ENCODE measurements at regions of chr13 and their contacts with region 1.

Region 1: GRCh38 chr13:29362849-29363604 is 232.5 kb downstream of the SLC7A1 start:
- DNase-seq: no peak
- H3K4me3 ChIP-seq: no peak overlapping the region
- H3K27ac ChIP-seq: no peak overlapping the region
- H3K4me1 ChIP-seq: no peaks in the 10 kb centered on the region
- H3K27me3 ChIP-seq: no peaks in the 10 kb centered on the region
- CTCF ChIP-seq: peak; percentile 66 to 96 (median 86)
- EP300 ChIP-seq: no peak
- POLR2A ChIP-seq: no peak

Region 2: GRCh38 chr13:28805193-28805819 is 557.7 kb before region 1 on chr13:
- intact Hi-C with region 1: loop called (anchors 5 kb)
- DNase-seq: no peak
- H3K4me3 ChIP-seq: no peak overlapping the region
- H3K27ac ChIP-seq: no peak overlapping the region
- H3K4me1 ChIP-seq: no peaks in the 10 kb centered on the region
- H3K27me3 ChIP-seq: peaks cover 0 to 13% (median 6%) of the 10 kb centered on the region in 3 donors
- CTCF ChIP-seq: peak in 1 of 4 experiments; percentile 20
- EP300 ChIP-seq: no peak
- POLR2A ChIP-seq: no peak

Region 3: GRCh38 chr13:28819735-28820098 is 543.3 kb before region 1 on chr13:
- intact Hi-C with region 1: loop called (anchors 5 kb)
- DNase-seq: no peak
- H3K4me3 ChIP-seq: peak overlapping the region in 3 of 4 donors; percentile 35 to 57 (median 51)
- H3K27ac ChIP-seq: no peak overlapping the region
- H3K4me1 ChIP-seq: peaks cover 0 to 18% (median 16%) of the 10 kb centered on the region in 4 donors
- H3K27me3 ChIP-seq: peaks cover 11 to 33% (median 31%) of the 10 kb centered on the region in 3 donors
- CTCF ChIP-seq: peak in 1 of 4 experiments; percentile 16
- EP300 ChIP-seq: no peak
- POLR2A ChIP-seq: no peak

Region 4: DNA sequence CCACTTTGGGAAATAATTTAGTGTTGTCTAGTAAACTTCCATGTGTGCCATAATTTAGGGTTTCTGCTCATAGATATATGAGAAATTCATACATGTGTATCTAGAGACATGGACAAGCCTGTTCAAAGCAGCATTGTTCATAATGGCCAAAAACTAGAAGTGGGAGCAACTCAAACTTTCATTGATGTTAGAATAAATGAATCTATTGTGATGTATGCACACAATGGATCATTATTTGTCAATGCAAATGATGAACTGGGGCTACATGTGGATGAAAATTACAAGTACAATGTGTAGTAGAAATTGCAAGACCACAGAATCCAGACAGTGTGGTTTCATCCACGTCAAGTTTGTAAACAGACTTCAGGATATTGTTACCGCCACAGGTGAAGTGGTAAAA is 52.2 kb before region 1 on chr13:
- intact Hi-C with region 1: no loop called
- DNase-seq: no peak
- H3K4me3 ChIP-seq: no peak overlapping the region
- H3K27ac ChIP-seq: no peak overlapping the region
- H3K4me1 ChIP-seq: no peaks in the 10 kb centered on the region
- H3K27me3 ChIP-seq: no peaks in the 10 kb centered on the region
- CTCF ChIP-seq: no peak
- EP300 ChIP-seq: no peak
- POLR2A ChIP-seq: no peak

Region 5: DNA sequence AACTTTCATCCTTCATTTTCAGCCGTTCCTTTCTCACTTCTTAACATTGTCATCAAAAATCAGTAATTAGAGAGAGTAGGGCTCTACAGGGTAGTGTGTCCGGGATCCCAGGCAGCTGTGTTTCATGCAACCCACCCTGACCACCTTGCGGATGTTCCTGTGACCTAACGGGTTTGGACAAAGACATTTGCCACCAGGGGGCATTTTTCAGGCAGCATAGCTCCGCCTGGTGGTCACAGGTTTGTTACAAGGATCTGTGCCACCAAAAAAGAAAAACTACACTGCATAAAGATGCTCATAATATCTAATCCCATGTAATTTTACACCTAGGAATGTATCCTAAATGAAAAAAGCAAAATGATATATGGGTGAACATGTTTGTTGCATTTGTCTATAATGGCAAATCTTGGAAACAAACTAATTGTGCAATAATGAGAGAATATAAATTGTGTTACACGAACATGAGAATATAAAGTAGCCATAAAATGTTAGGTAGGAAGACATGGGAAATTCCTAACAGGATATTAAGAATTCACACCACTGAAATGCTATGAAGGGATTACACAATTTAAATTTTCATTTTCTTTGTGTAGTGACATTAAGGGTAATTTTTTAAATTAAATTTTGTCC is 109.4 kb after region 1 on chr13:
- intact Hi-C with region 1: loop called (anchors 10 kb)
- DNase-seq: no peak
- H3K4me3 ChIP-seq: no peak overlapping the region
- H3K27ac ChIP-seq: no peak overlapping the region
- H3K4me1 ChIP-seq: no peaks in the 10 kb centered on the region
- H3K27me3 ChIP-seq: no peaks in the 10 kb centered on the region
- CTCF ChIP-seq: peak in 3 of 4 experiments; percentile 65 to 75 (median 71)
- EP300 ChIP-seq: no peak
- POLR2A ChIP-seq: no peak

Measured in sigmoid colon (tissue), 7 donors.